ENCODE measurements at regions of chr1 and their contacts with region 1.

Region 1: GRCh38 chr1:37692078-37692833 is at the start of gene CDCA8:
- H3K4me3 Mint-ChIP-seq: peak within 1 kb of the TSS; percentile 97
- H3K27ac Mint-ChIP-seq: peak within 1 kb of the TSS; percentile 92
- H3K4me1 Mint-ChIP-seq: peaks cover 38% of the 10 kb centered on the region
- H3K27me3 Mint-ChIP-seq: no peaks in the 10 kb centered on the region

Region 2: GRCh38 chr1:37474046-37474759 is 218.1 kb before region 1 on chr1 and contains the start of gene ZC3H12A:
- intact Hi-C with region 1: loop called (anchors 10 kb)
- H3K4me3 Mint-ChIP-seq: peak within 1 kb of the TSS; percentile 83
- H3K27ac Mint-ChIP-seq: peak within 1 kb of the TSS; percentile 82
- H3K4me1 Mint-ChIP-seq: peaks cover 74% of the 10 kb centered on the region
- H3K27me3 Mint-ChIP-seq: no peaks in the 10 kb centered on the region

Region 3: DNA sequence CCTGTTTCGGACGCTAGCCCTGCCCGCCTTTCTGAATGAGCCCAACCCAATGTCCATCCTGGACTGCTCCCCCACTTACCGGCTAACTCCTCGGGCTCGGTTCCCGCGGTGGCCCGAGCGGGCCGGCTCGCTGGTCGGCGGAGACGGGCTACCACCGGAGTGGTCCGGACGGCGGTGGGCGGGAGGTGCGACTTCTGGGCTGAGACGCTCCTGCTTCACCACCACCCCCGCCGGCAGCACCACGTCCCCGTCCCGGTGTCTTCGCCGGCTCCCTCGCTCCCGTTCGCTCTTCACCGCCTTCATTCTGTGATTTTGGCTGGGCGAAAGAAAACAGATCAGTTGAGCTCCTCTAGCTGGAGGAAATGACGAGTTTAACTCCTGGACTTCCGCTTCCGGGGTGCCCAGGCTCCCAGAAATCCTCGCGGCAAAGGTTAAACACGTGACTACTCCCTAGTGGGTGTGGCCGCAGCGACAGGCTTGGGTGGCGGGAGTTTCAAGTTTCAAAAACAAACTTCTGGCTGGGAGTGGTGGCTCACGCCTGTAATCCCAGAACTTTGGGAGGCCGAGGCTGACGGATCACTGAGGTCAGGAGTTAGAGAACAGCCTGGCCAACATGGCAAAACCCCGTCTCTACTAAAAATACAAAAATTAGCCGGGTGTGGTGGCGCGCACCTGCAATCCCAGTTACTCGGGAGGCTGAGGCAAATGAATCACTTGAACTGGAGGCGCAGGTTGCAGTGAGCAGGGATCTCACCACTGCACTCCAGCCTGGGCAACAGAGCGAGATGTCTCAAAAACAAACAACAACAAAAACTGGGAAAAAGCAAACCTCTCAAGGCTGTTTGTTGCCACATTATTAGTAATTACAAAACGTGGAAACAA is 138.1 kb before region 1 on chr1 and contains the start of gene SNIP1:
- intact Hi-C with region 1: loop called (anchors 2 kb)
- H3K4me3 Mint-ChIP-seq: peak within 1 kb of the TSS; percentile 93
- H3K27ac Mint-ChIP-seq: peak within 1 kb of the TSS; percentile 93
- H3K4me1 Mint-ChIP-seq: peaks cover 31% of the 10 kb centered on the region
- H3K27me3 Mint-ChIP-seq: no peaks in the 10 kb centered on the region

Region 4: DNA sequence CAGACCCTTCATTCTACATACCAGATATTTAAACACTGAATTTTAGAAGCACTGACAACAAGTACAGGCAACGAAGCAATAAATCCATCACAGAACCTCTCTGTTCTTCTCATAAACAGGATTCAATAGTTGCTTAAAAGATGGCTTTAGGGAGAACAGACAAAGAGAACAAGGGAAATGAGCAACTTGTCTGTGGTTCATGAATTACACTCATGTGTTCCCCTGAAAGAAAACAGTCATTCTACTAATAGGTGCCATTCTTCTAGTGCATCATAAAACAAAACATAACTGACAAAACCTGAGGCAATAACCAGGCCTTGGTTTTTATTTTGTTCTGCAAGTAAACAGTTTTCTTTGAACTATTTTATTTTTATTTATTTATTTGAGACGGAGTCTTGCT is 103.3 kb before region 1 on chr1:
- intact Hi-C with region 1: no loop called
- H3K4me3 Mint-ChIP-seq: no peak overlapping the region
- H3K27ac Mint-ChIP-seq: no peak overlapping the region
- H3K4me1 Mint-ChIP-seq: no peaks in the 10 kb centered on the region
- H3K27me3 Mint-ChIP-seq: no peaks in the 10 kb centered on the region

Region 5: DNA sequence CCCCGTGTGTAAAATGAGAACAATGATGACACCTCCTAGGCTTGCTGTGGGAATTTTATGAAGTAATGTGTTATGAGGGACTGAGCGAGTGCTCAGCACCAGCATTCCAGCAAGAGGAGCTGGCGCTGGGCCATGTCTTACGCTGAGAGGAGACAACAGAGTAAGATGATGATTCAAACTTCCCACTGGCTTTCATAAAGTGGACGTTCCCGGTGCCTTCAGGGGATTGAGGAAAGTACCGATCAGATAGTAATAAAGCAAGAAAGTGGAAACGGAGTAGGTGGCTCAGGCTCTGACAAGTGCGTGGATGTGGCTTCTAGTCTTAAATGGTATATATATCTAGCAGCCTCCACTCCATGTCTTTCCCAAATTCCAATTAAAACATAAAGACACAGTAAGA is 48.9 kb after region 1 on chr1:
- intact Hi-C with region 1: no loop called
- H3K4me3 Mint-ChIP-seq: no peak overlapping the region
- H3K27ac Mint-ChIP-seq: no peak overlapping the region
- H3K4me1 Mint-ChIP-seq: no peaks in the 10 kb centered on the region
- H3K27me3 Mint-ChIP-seq: peaks cover 33% of the 10 kb centered on the region

Region 6: DNA sequence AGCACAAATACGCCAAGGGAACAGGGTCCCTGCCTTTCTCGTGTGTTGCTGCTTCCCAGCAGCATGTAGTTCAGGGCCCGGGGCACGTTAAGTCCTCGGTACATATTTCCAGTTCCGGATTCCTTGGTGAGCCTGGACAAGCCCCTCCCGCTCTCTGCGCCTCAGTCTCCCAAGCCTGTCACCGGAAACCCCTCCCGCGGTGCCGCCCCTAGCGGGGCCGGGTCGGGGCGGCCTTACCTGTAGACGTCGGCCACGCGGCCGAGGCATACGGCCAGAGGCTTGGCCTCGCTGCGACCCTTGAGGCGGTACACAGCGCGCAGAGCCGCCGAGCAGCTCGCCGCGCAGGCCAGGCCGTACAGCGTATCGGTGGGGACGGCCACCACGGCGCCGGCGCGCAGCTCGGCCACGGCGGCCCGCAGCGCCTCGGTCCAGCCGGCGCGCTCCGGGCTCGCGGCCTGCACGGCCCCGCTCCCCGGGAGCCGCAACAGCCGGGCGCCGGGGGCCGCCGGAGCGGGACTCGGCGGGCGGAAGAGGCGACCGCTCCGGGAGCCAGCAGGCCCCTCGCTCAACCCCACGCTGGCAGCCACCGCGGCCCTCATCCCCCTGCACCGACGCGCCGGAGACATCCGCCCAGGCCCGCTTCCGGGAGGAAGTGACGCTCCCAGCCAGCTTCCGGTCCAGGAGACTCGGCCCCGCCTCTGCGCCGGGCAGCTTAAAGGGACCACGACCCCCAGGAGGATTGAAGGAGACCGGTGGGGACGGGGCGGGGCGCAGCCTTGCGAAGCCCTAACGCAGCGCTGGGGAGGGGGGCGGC is 115.5 kb after region 1 on chr1 and contains the starts of genes C1orf122 and YRDC:
- intact Hi-C with region 1: loop called (anchors 5 kb)
- H3K4me3 Mint-ChIP-seq: peak within 1 kb of the TSS; percentile 85
- H3K27ac Mint-ChIP-seq: peak within 1 kb of the TSS; percentile 94
- H3K4me1 Mint-ChIP-seq: peaks cover 44% of the 10 kb centered on the region
- H3K27me3 Mint-ChIP-seq: no peaks in the 10 kb centered on the region

Region 7: DNA sequence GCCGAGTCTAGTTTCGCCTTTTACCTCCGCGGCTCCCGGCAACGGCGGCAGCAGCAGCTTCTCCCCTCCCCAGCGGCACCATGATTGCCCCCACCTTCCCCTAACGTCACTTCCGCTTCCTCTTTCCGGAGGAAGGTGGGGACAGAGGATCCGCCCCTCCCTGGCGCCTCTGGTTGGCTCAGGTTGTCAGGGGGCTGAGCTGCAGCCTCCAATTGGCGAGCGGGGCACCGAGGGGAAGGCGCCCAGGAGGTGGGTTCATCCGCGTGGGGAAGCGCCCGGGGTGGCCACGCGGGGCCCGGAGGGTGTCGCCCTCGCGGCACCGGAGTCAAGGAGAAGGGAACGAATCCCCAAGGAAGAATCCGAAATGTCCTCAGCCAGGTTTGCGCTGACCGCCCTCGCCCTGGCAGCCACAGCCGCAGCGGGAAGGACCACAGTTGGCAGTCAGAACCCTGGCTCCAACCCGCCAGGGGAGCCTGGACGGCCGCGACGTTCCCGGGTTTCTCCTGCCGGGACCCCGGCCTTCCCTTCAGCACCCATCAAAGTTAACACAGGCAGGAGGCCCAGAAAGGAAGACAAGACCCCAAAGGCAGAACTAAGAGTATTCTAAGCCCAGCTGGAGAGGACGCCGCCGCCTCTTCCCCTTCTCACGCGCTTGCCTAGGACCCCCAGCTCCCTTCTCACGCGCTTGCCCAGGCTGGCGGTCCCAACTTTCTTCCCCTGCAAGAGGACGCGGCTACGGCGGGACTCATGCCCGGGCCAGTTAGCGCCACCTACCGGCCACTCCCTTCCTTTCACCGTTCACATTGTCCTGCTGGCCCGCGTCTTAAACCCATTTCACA is 167.5 kb after region 1 on chr1 and contains the start of gene MTF1:
- intact Hi-C with region 1: loop called (anchors 1 kb)
- H3K4me3 Mint-ChIP-seq: peak within 1 kb of the TSS; percentile 94
- H3K27ac Mint-ChIP-seq: peak within 1 kb of the TSS; percentile 97
- H3K4me1 Mint-ChIP-seq: peaks cover 30% of the 10 kb centered on the region
- H3K27me3 Mint-ChIP-seq: no peaks in the 10 kb centered on the region

Region 8: DNA sequence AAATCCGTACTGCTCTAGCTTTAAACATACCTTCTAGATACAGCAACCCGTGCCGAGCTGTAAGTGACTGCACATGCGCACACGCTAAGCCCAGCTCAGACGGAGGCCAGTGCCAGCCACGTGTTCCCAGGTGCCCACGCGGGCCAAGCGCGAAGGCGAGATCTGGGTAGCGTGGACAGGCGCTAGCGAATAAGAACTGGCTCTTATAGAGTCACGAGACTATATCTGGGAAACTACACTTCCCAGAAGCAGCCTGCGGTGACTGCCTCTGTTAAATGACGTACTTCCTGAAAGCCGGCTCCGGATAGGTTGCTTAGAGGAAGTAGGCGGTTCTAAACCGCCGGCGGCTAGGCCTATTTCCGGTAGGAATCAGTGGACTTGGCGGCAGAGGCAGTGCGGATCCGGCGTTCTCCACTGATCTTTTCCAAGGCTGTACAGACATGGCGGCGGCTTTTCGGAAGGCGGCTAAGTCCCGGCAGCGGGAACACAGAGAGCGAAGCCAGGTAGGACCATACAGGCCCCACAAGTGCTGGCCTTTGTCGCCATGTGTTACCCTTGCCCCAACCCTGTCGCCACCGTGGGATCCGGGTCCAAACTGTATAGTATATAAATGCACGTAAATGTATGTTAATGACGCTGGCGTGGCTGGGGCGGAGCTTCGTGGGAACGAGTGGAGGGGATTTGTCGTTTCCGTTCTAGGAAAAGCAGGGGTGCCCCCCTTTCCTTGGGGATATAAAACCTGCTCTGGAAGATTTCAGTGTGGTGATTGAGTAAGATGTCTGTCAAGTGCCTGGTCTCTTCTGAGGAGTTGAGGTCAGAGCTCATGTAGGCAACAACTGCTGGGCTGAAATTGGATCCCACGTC is 320.3 kb after region 1 on chr1 and contains the start of gene UTP11:
- intact Hi-C with region 1: loop called (anchors 10 kb)
- H3K4me3 Mint-ChIP-seq: peak within 1 kb of the TSS; percentile 98
- H3K27ac Mint-ChIP-seq: peak within 1 kb of the TSS; percentile 95
- H3K4me1 Mint-ChIP-seq: peaks cover 43% of the 10 kb centered on the region
- H3K27me3 Mint-ChIP-seq: no peaks in the 10 kb centered on the region

Measured in dendritic cell treated with granulocyte-macrophage colony-stimulating factor and Interleukin-4, amounts not matched to agents 40 ng/mL and 50 ng/mL, for 4 days (primary cell).